ENCODE measurements at regions of chr14 and their contacts with region 1.

Region 1: DNA sequence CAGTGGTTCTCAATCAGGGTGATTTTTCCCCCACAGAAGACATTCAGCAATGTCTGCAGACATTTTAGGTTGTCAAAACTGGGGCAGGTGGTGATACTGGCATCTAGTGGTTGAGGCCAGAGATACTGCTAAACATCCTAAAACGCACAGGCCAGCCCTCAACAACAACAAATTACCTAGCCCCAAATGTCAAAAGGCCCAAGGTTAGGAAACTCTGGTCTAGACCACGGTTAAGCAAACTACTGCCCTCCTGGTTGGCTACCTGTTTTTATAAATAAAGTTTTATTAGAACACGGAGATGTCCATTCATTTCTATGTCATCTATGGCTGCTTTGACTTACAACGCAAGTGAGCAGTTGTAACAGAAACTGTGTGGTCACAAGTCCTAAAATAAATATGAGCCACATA is 186.7 kb downstream of the EFCAB11 start:
- DNase-seq: peak in 1 of 3 donors; percentile 63
- ATAC-seq: peak; percentile 95 to 98 (median 96)
- H3K4me3 ChIP-seq: no peak overlapping the region
- H3K27ac ChIP-seq: no peak overlapping the region
- H3K4me1 ChIP-seq: no peaks in the 10 kb centered on the region
- H3K27me3 ChIP-seq: no peaks in the 10 kb centered on the region
- CTCF ChIP-seq: peak; percentile 65 to 85 (median 77)
- POLR2A ChIP-seq: no peak

Region 2: DNA sequence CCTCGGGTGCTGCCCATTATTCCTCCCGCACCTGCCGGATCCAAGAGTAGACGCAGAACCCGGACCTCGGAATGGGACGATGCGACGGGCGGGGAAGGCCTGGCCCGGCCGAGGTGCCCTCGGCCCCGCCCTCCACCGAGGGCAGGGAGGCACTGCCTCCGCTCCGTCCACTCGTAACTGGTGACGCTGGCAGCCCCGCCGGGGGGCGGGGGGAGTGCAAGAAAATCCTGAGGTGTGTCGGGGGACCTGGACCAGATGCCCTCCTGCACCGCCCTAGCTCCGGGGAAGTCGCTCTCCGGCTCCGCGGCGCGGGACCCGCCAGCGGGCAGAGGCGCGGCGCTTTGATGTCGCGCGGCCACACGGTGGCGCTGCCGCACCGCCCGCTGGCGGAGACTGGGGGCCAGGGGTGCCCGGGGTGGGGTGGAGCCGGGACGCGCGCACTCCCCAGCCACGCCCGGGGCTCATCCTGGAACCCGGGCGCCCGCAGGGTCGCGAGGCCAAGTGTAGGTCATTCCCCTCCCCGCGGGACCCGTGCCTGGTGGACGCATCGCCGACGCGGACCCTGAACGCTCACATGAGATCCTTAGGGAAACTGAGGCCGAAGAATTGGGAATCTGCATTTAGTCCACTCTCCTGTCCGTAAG is 740.6 kb before region 1 on chr14:
- intact Hi-C with region 1: loop called in 1 of 2 experiments (anchors 10 kb)
- DNase-seq: peak; percentile 57 to 66 (median 58)
- ATAC-seq: peak; percentile 86 to 95 (median 90)
- H3K4me3 ChIP-seq: peak overlapping the region; percentile 50 to 71 (median 65)
- H3K27ac ChIP-seq: no peak overlapping the region
- H3K4me1 ChIP-seq: peaks cover 0 to 11% (median 2%) of the 10 kb centered on the region in 4 donors
- H3K27me3 ChIP-seq: no peaks in the 10 kb centered on the region
- CTCF ChIP-seq: peak; percentile 63 to 92 (median 78)
- POLR2A ChIP-seq: no peak

Region 3: DNA sequence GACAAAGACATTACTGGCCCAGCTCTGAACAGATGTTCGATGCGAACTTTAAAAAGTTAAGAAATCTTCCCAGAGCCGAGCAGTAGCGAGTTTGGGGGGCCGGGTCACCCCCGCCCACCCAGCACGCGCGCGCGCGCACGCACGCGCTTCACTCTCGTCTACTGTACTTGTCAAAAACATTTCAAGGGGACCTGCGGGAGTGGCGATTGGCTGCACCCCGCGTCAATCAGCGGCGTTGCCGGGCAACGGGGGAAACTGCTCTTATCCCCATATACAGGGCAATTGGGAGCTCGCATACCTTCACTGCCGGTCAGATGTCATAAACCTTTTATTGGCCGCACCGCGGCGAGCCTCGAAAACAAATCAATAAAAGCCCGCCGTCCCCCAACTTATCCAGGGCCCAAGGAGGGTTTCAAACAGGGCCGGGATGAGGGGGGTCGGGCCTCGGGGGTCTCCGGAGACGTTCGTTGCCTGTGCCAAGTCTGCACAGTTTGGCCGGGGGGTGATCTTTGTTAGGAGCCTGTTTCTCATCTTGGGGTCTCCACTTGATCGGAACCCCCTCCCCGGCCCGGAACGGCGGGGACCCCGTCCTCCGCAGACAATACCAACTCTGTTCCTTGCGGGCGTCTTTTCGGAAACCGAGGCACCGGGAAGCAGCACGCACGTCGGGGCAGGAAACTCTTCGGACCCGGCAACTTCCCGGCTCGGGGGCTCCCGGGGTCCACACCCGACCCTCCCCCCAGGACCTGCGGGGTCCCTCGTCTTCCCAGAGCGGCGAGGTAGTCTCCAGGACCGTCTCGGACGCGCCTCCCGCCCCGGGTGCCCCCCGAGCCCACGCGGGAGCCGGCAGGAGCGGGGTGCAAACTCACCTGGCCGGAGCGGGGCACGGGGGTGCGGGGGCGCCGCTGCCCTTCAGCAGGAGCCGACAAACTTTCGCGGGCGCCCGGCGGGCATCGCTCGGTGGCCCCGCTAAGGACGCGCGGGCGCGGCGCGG is 351.6 kb before region 1 on chr14:
- intact Hi-C with region 1: loop called in 1 of 2 experiments (anchors 10 kb)
- DNase-seq: peak; percentile 97 to 99 (median 99)
- ATAC-seq: peak; percentile 79 to 84 (median 81)
- H3K4me3 ChIP-seq: peak overlapping the region; percentile 59 to 76 (median 66)
- H3K27ac ChIP-seq: peak overlapping the region; percentile 92 to 97 (median 93)
- H3K4me1 ChIP-seq: peaks cover 0 to 24% (median 4%) of the 10 kb centered on the region in 4 donors
- H3K27me3 ChIP-seq: no peaks in the 10 kb centered on the region
- CTCF ChIP-seq: no peak
- POLR2A ChIP-seq: peak; percentile 30

Region 4: GRCh38 chr14:89707086-89707485 is 60.8 kb before region 1 on chr14:
- intact Hi-C with region 1: no loop called
- DNase-seq: no peak
- ATAC-seq: no peak
- H3K4me3 ChIP-seq: no peak overlapping the region
- H3K27ac ChIP-seq: no peak overlapping the region
- H3K4me1 ChIP-seq: no peaks in the 10 kb centered on the region
- H3K27me3 ChIP-seq: no peaks in the 10 kb centered on the region
- CTCF ChIP-seq: no peak
- POLR2A ChIP-seq: no peak